ENCODE measurements at regions of chr17 and their contacts with region 1.

Region 1: GRCh38 chr17:38752119-38752929 is at the start of gene PSMB3:
- DNase-seq: peak; percentile 95 to 100 (median 99)
- H3K4me3 ChIP-seq: peak within 1 kb of the TSS; percentile 74 to 100 (median 96)
- H3K27ac ChIP-seq: peak within 1 kb of the TSS in 58 of 59 donors; percentile 20 to 96 (median 88)
- H3K27me3 ChIP-seq: no peaks in the 10 kb centered on the region
- CTCF ChIP-seq: peak in 15 of 56 donors; percentile 4 to 46 (median 20)
- total RNA-seq, gene PSMB3: 55.5 to 145 (median 107) TPM

Region 2: DNA sequence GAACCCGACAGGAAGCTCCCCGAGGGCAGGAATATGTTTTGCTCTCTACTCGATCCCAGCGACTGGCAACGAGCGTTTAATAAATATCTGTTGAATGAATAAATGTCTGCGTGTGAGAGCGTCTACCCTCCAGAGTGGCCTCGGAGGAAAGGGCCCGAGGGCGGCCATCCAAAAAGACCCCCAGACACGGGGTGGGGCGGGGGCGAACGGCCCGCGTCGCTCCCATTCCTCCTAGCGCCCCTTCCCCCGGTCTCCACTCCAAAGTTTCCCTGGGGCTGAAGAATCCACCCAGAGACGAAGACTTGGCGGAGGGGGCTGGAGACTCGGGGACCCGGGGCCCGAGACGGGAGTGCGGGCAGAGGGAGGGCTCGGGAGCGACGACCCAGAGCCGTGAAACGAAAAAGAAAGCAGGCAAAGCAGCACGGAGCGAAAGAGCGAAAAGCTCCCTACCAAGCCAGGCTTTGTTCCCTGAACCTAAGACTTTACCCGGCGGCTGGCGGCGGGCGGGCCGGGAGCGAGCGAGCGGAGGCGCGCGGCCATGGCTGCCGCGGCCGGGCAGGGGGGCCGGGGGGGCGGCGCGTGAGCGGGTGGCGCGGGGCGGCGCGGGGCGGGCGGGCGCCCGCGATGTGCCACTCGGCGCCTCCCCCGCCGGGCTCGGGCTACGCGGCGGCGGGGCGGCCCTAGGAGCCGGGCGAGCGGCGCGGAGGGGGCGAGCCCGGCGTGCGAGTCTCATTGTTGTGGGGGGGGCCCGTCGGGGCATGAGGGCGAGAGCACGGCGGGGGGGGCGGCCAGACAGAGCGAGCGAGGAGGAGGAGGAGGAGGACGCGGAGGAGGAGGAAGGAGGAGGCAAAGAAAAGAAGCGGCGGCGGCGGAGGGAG is 47.4 kb before region 1 on chr17 and contains the start of gene MLLT6:
- intact Hi-C with region 1: loop called in 1 of 2 experiments (anchors 5 kb)
- DNase-seq: peak; percentile 64 to 88 (median 82)
- H3K4me3 ChIP-seq: peak within 1 kb of the TSS; percentile 64 to 98 (median 83)
- H3K27ac ChIP-seq: peak within 1 kb of the TSS; percentile 68 to 97 (median 93)
- H3K27me3 ChIP-seq: no peaks in the 10 kb centered on the region
- CTCF ChIP-seq: peak in 3 of 56 donors; percentile 8 to 20 (median 13)
- total RNA-seq, gene MLLT6: 118 to 242 (median 168) TPM

Region 3: GRCh38 chr17:38799378-38800236 is 47.3 kb after region 1 on chr17 and contains the start of gene PIP4K2B:
- intact Hi-C with region 1: loop called (anchors 2 kb)
- DNase-seq: peak; percentile 85 to 98 (median 96)
- H3K4me3 ChIP-seq: peak within 1 kb of the TSS; percentile 74 to 98 (median 91)
- H3K27ac ChIP-seq: peak within 1 kb of the TSS; percentile 91 to 100 (median 100)
- H3K27me3 ChIP-seq: no peaks in the 10 kb centered on the region
- CTCF ChIP-seq: peak in 16 of 56 donors; percentile 2 to 31 (median 19)
- total RNA-seq, gene PIP4K2B: 106 to 220 (median 167) TPM

Region 4: DNA sequence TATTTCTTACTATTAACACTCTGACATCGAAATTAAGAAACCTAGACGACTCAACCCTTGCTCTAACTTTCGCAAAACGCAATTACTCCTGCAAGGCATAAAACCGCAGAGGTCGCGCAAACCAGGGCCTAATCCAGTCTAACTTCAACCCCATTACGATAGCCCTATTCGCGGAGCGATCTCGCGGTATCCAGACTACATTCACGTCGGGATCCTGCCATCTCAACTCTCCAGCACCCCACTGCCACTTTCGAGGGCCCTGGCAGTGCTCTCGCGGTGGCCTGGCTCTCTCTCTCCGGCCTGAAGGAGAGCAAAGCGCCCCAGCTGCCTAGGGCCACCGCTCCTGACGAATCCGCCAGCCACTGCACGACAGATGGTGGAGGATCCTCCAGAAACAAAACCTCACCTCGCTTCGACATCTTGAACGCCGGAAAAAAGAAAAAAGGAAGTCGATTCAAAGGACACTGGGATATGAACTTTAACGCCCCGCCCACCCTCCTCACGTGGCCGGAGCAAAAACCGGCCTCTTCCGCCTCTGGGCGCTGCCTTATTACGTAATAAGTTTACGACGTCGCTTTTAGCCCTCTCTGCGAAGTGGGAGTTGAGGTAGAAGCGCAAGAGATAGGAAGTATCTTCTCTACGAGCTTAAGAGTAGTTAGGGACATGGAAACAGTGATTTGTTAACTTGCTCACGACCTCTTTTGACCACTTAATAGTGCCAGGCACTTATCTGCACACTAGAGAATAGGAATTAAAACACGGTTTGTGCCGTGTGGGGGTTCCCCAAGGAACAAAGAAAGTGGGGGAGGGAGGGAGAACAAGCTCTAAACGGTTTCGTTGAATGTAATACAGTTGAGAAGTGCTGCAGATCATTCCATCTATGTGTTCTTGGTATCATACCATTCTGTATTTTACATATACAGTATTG is 101.2 kb after region 1 on chr17 and contains the start of gene RPL23:
- intact Hi-C with region 1: loop called in 1 of 2 experiments (anchors 10 kb)
- DNase-seq: peak; percentile 87 to 95 (median 93)
- H3K4me3 ChIP-seq: peak within 1 kb of the TSS; percentile 45 to 95 (median 77)
- H3K27ac ChIP-seq: peak within 1 kb of the TSS; percentile 65 to 98 (median 93)
- H3K27me3 ChIP-seq: no peaks in the 10 kb centered on the region
- CTCF ChIP-seq: peak in 25 of 56 donors; percentile 8 to 53 (median 24)
- total RNA-seq, gene RPL23: 239 to 571 (median 364) TPM

Measured in dorsolateral prefrontal cortex (tissue), 120 donors.